ENCODE measurements at regions of chr20 and their contacts with region 1.

Region 1: DNA sequence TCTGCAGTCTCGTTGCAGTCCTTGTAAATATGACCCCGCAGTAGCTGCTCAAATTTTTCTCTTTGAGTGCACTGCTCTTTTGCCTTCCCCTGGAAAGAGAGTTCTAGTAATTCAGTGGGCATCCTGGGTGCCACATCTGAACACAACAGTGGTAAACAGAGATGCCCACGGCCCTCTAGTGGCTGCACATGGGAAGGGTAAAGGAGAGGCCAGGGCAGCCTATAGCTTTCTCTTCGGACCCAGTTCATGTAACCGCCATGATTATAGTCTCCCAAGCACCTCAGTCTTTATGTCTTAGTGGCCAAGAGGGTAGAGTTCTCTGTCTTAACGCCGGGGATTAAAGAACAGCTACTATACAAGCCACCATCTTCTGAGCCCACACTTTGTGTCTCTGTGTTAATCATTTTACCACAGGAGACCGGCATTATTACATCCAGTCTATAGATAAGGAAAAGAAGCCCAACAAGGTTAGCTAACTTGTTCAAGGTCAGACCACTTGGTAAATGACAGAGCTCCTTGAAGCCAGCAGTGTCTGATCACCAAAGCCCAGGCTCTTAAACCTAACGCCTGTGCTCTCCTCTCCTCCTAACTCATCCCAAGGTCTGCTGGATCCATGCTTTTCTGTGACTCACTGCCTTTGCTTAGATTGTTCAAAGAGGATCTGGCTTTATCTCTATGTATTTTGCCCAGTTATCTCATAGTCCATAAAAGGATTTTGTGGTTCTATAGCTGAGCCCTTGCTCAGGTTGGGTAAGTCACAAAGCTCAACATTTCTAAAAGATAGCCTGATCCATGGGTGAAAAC is 81.8 kb downstream of the ISM1 start:
- DNase-seq: no peak
- ATAC-seq: peak; percentile 75 to 89
- H3K4me3 ChIP-seq: no peak overlapping the region
- H3K27ac ChIP-seq: no peak overlapping the region
- H3K4me1 ChIP-seq: no peaks in the 10 kb centered on the region
- H3K27me3 ChIP-seq: no peaks in the 10 kb centered on the region
- CTCF ChIP-seq: peak; percentile 69

Region 2: GRCh38 chr20:13119583-13119982 is 183.3 kb before region 1 on chr20:
- intact Hi-C with region 1: loop called (anchors 10 kb)
- DNase-seq: no peak
- ATAC-seq: peak; percentile 67 to 86
- H3K4me3 ChIP-seq: no peak overlapping the region
- H3K27ac ChIP-seq: no peak overlapping the region
- H3K4me1 ChIP-seq: no peaks in the 10 kb centered on the region
- H3K27me3 ChIP-seq: no peaks in the 10 kb centered on the region
- CTCF ChIP-seq: peak; percentile 86

Measured in lower lobe of right lung (tissue), 2 donors.